GM12878 (cell line): ENCODE measurements at regions of chr3 and their contacts with region 1.

Region 1: DNA sequence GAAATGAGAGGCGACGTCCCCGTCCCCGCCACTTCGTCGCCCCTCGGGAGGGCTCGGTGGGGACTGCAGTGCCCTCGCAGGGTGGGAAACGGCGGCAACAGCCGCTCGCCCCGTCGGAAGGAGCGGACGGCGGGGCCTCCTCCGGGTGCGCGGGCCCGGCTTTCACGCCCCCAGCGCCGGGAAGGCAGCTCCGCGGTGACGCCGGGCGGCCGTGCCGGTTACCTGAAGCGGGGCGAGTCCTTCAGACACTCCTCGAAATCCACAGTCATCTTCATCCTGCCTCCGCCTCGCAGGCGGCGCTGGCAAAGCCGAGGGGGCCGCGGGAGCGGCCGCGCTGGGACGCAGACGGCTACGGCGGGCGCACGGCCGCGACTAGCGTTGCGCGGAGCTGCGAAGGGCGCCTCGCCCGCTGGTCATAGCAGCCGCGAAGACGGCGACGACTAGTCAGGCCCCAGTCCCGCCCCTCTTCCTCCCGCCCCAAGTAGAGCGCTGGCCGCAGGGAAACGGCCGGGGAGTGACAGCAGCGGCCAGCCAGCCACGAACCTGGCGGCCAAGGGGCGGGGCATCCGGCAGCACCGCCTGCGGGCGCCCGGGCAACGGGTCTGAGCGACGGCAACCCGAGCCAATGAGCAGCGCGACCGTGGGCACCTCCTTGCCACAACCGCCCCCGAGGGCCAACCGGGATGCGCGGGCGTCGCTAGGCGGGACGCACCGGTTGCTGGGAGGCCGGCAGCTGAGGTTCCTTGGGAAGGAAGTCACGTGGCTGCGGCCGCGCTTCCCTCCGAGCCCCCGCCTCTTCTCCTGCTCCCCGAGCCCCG is at the start of gene ACAP2:
- DNase-seq: peak; percentile 93
- ATAC-seq: peak; percentile 93
- H3K4me3 ChIP-seq: peak within 1 kb of the TSS; percentile 89
- H3K27ac ChIP-seq: peak within 1 kb of the TSS; percentile 82
- H3K4me1 ChIP-seq: peaks cover 7% of the 10 kb centered on the region
- H3K27me3 ChIP-seq: no peaks in the 10 kb centered on the region
- CTCF ChIP-seq: no peak
- EP300 ChIP-seq: no peak
- POLR2A ChIP-seq: peak; percentile 98
- RAD21 ChIP-seq: no peak
- polyA plus RNA-seq, gene ACAP2: 7.1 to 10.5 TPM

Region 2: DNA sequence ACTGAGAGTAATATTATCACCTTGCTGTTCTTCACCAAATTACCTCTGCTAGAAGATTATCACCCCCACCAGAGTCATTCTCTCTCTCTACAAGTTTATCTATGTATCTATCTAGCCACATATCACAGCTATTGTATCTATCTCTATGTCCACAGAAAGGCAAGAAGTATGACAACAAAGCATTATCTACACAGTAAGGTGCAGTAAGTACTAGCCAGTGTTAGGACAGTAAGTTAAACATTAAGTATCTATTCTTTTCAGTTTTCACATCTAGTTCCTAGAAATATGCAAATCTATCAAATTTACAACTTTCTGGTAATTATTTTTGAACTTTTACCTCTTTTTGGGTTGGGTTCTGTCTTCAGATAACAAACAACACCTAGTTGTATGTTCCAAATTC is 145.3 kb before region 1 on chr3:
- CTCF ChIA-PET with region 1: no interaction called
- POLR2A ChIA-PET with region 1: no interaction called
- RAD21 ChIA-PET with region 1: interaction called, 4 read pairs
- SMC1A ChIA-PET with region 1: no interaction called
- in situ Hi-C with region 1: no loop called
- intact Hi-C with region 1: loop called (anchors 5 kb)
- DNase-seq: peak; percentile 5
- ATAC-seq: peak; percentile 45
- H3K4me3 ChIP-seq: no peak overlapping the region
- H3K27ac ChIP-seq: no peak overlapping the region
- H3K4me1 ChIP-seq: no peaks in the 10 kb centered on the region
- H3K27me3 ChIP-seq: no peaks in the 10 kb centered on the region
- CTCF ChIP-seq: no peak
- EP300 ChIP-seq: no peak
- POLR2A ChIP-seq: no peak
- RAD21 ChIP-seq: no peak

Region 3: GRCh38 chr3:195372220-195372619 is 70.6 kb before region 1 on chr3:
- CTCF ChIA-PET with region 1: interaction called, 3 read pairs
- POLR2A ChIA-PET with region 1: interaction called, 11 read pairs
- RAD21 ChIA-PET with region 1: no interaction called
- SMC1A ChIA-PET with region 1: interaction called, 4 read pairs
- in situ Hi-C with region 1: no loop called
- intact Hi-C with region 1: no loop called
- DNase-seq: no peak
- ATAC-seq: no peak
- H3K4me3 ChIP-seq: no peak overlapping the region
- H3K27ac ChIP-seq: no peak overlapping the region
- H3K4me1 ChIP-seq: no peaks in the 10 kb centered on the region
- H3K27me3 ChIP-seq: no peaks in the 10 kb centered on the region
- CTCF ChIP-seq: no peak
- EP300 ChIP-seq: no peak
- POLR2A ChIP-seq: no peak
- RAD21 ChIP-seq: no peak

Region 4: DNA sequence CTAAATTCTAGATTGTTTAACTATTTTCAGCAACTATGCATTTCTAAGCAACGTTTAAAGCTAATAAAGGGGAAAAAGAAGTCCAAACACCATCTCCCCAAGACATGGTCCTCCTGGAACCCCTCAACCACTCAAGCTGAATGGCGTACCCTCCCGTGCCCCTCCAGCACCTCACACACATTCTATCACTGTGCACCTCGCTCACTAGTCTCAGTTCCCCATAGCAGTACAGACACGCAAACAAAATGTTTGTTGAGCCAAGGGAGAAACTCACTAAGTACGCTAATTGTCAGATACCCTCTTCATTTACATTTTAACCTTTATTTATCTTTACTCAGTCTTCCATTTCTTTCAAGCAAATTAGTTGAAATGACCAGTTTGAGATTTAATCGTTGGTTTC is 48.8 kb before region 1 on chr3:
- CTCF ChIA-PET with region 1: interaction called, 9 read pairs
- POLR2A ChIA-PET with region 1: interaction called, 29 read pairs
- RAD21 ChIA-PET with region 1: interaction called, 39 read pairs
- SMC1A ChIA-PET with region 1: interaction called, 63 read pairs
- in situ Hi-C with region 1: no loop called
- intact Hi-C with region 1: loop called (anchors 2 kb)
- DNase-seq: no peak
- ATAC-seq: peak; percentile 91
- H3K4me3 ChIP-seq: peak overlapping the region; percentile 42
- H3K27ac ChIP-seq: peak overlapping the region; percentile 76
- H3K4me1 ChIP-seq: peaks cover 27% of the 10 kb centered on the region
- H3K27me3 ChIP-seq: no peaks in the 10 kb centered on the region
- CTCF ChIP-seq: no peak
- EP300 ChIP-seq: peak in 1 of 2 experiments; percentile 65; a peak in 2 of 4 replicates
- POLR2A ChIP-seq: no peak
- RAD21 ChIP-seq: no peak

Region 5: DNA sequence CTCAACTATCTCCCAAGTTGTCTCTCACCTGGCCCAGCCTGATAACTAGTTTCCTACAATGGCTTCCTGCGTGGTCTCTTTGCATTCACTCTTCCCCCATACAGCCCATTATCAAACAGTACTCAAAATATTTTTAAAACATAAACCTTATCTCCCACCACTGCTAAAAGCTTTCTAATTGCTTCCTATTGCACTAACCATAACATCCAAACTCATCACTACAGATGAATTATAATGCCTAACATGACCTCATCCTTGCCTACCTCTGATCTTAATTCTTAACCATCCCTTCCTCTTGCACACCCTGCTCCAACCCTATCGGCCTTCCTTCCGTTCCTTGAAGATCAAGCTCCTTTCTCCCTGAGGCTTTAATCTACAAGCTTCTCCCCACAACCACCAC is 16.9 kb before region 1 on chr3:
- CTCF ChIA-PET with region 1: no interaction called
- POLR2A ChIA-PET with region 1: no interaction called
- RAD21 ChIA-PET with region 1: no interaction called
- SMC1A ChIA-PET with region 1: interaction called, 12 read pairs
- in situ Hi-C with region 1: no loop called
- intact Hi-C with region 1: no loop called
- DNase-seq: no peak
- ATAC-seq: no peak
- H3K4me3 ChIP-seq: no peak overlapping the region
- H3K27ac ChIP-seq: no peak overlapping the region
- H3K4me1 ChIP-seq: no peaks in the 10 kb centered on the region
- H3K27me3 ChIP-seq: no peaks in the 10 kb centered on the region
- CTCF ChIP-seq: no peak
- EP300 ChIP-seq: no peak
- POLR2A ChIP-seq: no peak
- RAD21 ChIP-seq: no peak

Region 6: GRCh38 chr3:195542698-195543499 is 100.1 kb after region 1 on chr3 and contains the start of gene PPP1R2:
- CTCF ChIA-PET with region 1: interaction called, 3 read pairs
- POLR2A ChIA-PET with region 1: interaction called, 9 read pairs
- RAD21 ChIA-PET with region 1: interaction called, 12 read pairs
- SMC1A ChIA-PET with region 1: interaction called, 3 read pairs
- in situ Hi-C with region 1: no loop called
- intact Hi-C with region 1: no loop called
- DNase-seq: peak; percentile 64
- ATAC-seq: peak; percentile 88
- H3K4me3 ChIP-seq: peak within 1 kb of the TSS; percentile 77
- H3K27ac ChIP-seq: peak within 1 kb of the TSS; percentile 60
- H3K4me1 ChIP-seq: peaks cover 15% of the 10 kb centered on the region
- H3K27me3 ChIP-seq: no peaks in the 10 kb centered on the region
- CTCF ChIP-seq: no peak
- EP300 ChIP-seq: no peak
- POLR2A ChIP-seq: peak; percentile 99
- RAD21 ChIP-seq: no peak
- polyA plus RNA-seq, gene PPP1R2: 10.5 to 22.7 TPM